Activated CD8-positive, alpha-beta memory T cell treated with anti-CD3 and anti-CD28 coated beads, Interleukin-2, amount 10 ng/mL, durations not matched to agents 7 days and 5 days (primary cell): ENCODE measurements at regions of chr11 and their contacts with region 1.

Region 1: DNA sequence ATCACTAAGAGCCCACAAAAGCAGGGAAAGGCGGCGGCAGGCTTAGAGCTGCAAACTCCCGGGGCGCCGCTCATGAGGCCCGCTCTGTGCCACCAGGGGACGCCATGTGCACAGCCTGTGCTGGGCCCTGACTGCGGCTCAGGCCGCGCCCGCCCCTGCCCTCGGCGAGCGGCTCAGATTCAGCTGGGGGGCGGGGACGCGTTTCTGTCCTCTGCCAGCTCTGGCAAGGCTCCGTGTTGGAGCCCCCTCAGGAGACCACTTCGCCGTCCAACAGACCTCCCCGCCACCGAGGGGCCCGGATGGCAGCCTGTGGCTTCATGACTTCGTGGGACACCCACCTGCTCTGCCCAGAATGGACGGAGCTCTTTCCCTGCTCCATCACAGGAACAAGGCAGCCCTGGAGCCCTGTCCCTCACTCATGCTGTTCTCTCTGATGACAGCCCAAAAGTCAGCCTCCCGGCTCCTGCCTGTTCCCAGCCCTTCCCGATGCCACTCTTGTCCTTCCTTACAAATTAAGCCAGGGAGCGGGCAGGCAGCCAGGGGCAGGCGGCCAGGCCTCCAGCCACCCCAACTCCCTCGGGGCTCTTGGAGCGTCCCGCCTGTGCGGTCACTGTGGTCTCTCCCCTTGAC is 69.1 kb downstream of the NAT10 start:
- DNase-seq: peak; percentile 86
- ATAC-seq: peak; percentile 100
- H3K4me3 Mint-ChIP-seq: peak overlapping the region; percentile 49
- H3K27ac Mint-ChIP-seq: no peak overlapping the region
- H3K4me1 Mint-ChIP-seq: peaks cover 24% of the 10 kb centered on the region
- H3K27me3 Mint-ChIP-seq: peaks cover 5% of the 10 kb centered on the region

Region 2: GRCh38 chr11:34161812-34162499 is 12.6 kb before region 1 on chr11:
- CTCF ChIA-PET with region 1: interaction called, 11 read pairs
- DNase-seq: peak; percentile 91
- ATAC-seq: peak; percentile 91
- H3K4me3 Mint-ChIP-seq: no peak overlapping the region
- H3K27ac Mint-ChIP-seq: peak overlapping the region; percentile 70
- H3K4me1 Mint-ChIP-seq: peaks cover 41% of the 10 kb centered on the region
- H3K27me3 Mint-ChIP-seq: no peaks in the 10 kb centered on the region

Region 3: GRCh38 chr11:34219941-34220370 is 45.4 kb after region 1 on chr11:
- CTCF ChIA-PET with region 1: interaction called, 10 read pairs
- DNase-seq: no peak
- ATAC-seq: no peak
- H3K4me3 Mint-ChIP-seq: no peak overlapping the region
- H3K27ac Mint-ChIP-seq: no peak overlapping the region
- H3K4me1 Mint-ChIP-seq: peaks cover 4% of the 10 kb centered on the region
- H3K27me3 Mint-ChIP-seq: peaks cover 24% of the 10 kb centered on the region

Region 4: GRCh38 chr11:34250732-34251639 is 76.5 kb after region 1 on chr11:
- CTCF ChIA-PET with region 1: interaction called, 52 read pairs
- DNase-seq: peak; percentile 79
- ATAC-seq: peak; percentile 92
- H3K4me3 Mint-ChIP-seq: peak overlapping the region; percentile 27
- H3K27ac Mint-ChIP-seq: peak overlapping the region; percentile 58
- H3K4me1 Mint-ChIP-seq: peaks cover 53% of the 10 kb centered on the region
- H3K27me3 Mint-ChIP-seq: peaks cover 23% of the 10 kb centered on the region

Region 5: DNA sequence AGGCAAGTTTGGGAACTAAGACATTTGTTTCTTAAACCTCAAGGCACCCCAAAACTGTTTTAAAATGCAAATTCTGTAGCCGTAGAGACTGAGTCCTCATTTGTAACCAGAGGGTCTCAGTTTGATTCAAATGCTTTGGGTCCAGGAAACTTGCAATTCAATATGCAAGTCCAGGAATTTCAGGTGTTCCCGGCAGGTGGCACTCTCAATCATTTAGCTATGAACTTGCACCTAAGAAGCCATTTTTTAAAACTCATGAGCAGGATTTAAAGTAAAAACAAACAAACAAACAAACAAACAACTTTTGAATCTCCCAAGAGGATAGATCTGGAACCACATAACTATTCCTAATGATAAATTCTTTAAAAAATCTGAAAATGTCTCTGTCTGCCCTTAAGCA is 192.0 kb after region 1 on chr11:
- CTCF ChIA-PET with region 1: interaction called, 28 read pairs
- DNase-seq: no peak
- ATAC-seq: no peak
- H3K4me3 Mint-ChIP-seq: no peak overlapping the region
- H3K27ac Mint-ChIP-seq: no peak overlapping the region
- H3K4me1 Mint-ChIP-seq: peaks cover 7% of the 10 kb centered on the region
- H3K27me3 Mint-ChIP-seq: peaks cover 41% of the 10 kb centered on the region